Endothelial cell of umbilical vein (primary cell): ENCODE measurements at regions of chr18 and their contacts with region 1.

Region 1: DNA sequence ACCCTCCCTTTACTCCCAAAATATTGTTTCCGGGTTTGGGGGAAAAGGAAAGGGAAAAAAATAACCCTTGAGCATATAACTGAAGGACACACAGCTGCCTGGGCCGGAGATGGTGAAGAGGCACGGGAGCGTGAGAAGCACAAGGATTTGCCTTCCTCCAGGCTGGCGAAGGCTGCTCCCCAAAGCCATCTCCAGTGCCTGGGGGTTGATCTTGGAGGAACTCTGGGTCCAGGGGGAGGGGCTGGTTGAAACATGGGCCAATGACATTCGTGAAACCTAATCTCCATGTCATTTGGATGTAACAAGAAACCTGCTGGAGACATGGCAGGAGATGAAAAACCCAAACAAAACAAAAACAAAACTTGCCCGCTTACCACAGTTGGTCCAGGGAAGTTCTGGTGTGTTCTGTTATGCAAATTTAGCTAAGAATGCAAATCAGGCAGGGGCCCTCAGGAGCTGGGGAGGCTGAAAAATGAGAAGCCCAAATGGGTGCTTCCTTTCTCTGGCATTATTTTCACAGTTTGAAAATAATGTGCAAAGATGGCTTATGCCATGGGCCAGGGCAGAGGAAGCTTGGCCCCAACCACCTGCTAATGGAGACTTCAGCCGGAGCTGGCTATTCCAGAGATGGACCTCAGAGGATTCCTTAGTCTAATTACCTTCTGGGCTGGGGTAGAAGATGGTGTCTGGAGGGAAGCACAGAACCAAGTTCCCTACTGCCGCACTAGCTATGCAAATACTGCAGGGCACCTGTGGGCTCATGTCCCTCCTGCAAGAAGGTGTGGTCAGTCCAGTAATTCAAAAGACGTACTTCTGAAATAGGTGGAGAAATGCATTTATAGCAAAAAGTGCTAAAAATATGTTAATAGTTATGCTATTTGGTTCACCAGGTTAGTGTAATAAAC is 180.9 kb downstream of the BCL2 start:
- DNase-seq: no peak
- H3K4me3 ChIP-seq: peak overlapping the region in 1 of 3 experiments; percentile 16
- H3K27ac ChIP-seq: peak overlapping the region; percentile 75
- H3K4me1 ChIP-seq: peaks cover 22% of the 10 kb centered on the region
- H3K27me3 ChIP-seq: no peaks in the 10 kb centered on the region
- CTCF ChIP-seq: no peak
- POLR2A ChIP-seq: no peak

Region 2: DNA sequence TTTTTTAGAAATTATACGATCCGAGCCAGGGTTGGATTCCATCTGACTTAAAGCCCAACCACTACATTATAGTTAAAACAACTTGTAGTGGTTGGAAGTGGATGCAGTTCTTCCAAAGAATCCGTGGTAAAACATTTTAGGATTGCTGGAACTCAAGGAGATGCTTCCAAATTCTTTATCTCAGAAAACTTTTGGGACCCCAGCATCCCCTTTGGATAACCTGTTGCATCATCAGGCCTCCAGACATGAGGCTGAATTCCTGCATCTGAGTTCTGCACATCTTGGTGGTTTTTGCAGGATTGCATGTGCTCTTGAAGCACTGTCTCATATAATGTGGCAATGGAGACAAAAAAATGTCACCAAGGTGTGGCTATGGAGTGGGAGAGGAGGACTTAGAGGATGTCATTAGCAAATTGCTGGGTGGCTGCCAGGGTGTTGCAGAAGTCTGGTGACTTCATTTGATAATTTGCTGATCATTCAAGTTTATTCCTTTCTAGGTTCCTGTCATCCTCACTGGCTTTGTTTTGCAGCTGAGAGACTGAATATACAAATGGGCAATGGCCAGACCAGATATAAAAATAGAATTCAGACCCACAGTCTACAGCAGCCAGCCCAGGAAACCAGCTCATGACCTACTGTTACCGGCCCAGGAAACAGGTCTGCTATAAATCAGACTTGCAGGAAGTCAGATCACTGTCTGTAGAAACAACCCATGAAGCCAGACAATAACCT is 26.9 kb before region 1 on chr18:
- CTCF ChIA-PET with region 1: no interaction called
- POLR2A ChIA-PET with region 1: no interaction called
- dilution Hi-C with region 1: no loop called
- intact Hi-C with region 1: loop called (anchors 1 kb)
- DNase-seq: peak; percentile 18
- H3K4me3 ChIP-seq: no peak overlapping the region
- H3K27ac ChIP-seq: no peak overlapping the region
- H3K4me1 ChIP-seq: peaks cover 12% of the 10 kb centered on the region
- H3K27me3 ChIP-seq: peaks cover 2 to 8% of the 10 kb centered on the region in 2 experiments
- CTCF ChIP-seq: no peak
- POLR2A ChIP-seq: no peak

Region 3: GRCh38 chr18:63164396-63164795 is 25.7 kb after region 1 on chr18:
- CTCF ChIA-PET with region 1: no interaction called
- POLR2A ChIA-PET with region 1: no interaction called
- dilution Hi-C with region 1: no loop called
- intact Hi-C with region 1: no loop called
- DNase-seq: no peak
- H3K4me3 ChIP-seq: no peak overlapping the region
- H3K27ac ChIP-seq: no peak overlapping the region
- H3K4me1 ChIP-seq: peaks cover 4% of the 10 kb centered on the region
- H3K27me3 ChIP-seq: no peaks in the 10 kb centered on the region
- CTCF ChIP-seq: no peak
- POLR2A ChIP-seq: no peak